ENCODE measurements at regions of chr15 and their contacts with region 1.

Region 1: GRCh38 chr15:55218056-55218455 is 21.3 kb upstream of the RSL24D1 start:
- DNase-seq: no peak
- H3K4me3 ChIP-seq: no peak overlapping the region
- H3K27ac ChIP-seq: no peak overlapping the region
- H3K4me1 ChIP-seq: no peaks in the 10 kb centered on the region
- H3K27me3 ChIP-seq: no peaks in the 10 kb centered on the region
- CTCF ChIP-seq: no peak
- EP300 ChIP-seq: no peak
- POLR2A ChIP-seq: no peak
- RAD21 ChIP-seq: no peak

Region 2: DNA sequence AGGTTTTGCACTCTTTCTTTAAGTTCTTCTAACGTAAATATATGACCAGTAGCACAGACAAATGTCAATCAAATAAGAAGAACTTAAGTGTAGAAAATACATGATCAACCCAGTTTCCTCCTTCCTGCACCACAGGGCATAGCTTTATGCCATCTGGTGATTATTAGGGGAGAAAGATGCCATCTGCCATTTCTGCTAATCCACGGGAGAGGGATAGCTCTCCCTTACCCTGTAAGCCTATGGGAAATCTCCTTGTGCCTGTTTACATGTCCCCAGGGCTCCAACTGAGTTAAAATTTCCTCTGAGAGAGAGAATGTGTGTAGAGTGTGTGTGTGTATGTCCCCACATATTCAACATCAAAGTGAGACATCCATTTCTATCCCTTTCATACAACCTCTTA is 157.2 kb before region 1 on chr15:
- CTCF ChIA-PET with region 1: no interaction called
- POLR2A ChIA-PET with region 1: no interaction called
- DNase-seq: no peak
- H3K4me3 ChIP-seq: no peak overlapping the region
- H3K27ac ChIP-seq: no peak overlapping the region
- H3K4me1 ChIP-seq: no peaks in the 10 kb centered on the region; a peak in 1 of 7 replicates
- H3K27me3 ChIP-seq: no peaks in the 10 kb centered on the region
- CTCF ChIP-seq: no peak
- EP300 ChIP-seq: no peak
- POLR2A ChIP-seq: no peak
- RAD21 ChIP-seq: no peak

Region 3: DNA sequence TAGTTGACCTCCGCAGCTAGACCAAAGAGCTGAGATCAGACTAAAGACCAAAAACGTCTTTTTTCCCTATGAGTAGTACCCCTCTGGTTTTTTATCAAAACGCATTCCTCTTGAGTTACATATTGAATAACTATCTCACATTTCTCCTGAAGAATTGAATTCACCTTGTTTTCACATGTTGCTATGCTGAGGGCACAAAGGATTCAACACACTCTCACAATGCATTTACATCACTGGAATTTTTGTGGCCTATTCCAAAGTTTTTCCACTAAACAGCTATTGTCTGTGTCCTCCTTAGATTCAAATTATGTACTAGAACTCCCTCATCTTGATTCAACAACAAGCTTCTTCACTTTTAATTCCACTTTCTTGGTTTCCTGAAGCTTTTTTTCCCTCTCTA is 133.8 kb before region 1 on chr15:
- CTCF ChIA-PET with region 1: no interaction called
- POLR2A ChIA-PET with region 1: no interaction called
- DNase-seq: no peak
- H3K4me3 ChIP-seq: no peak overlapping the region
- H3K27ac ChIP-seq: no peak overlapping the region
- H3K4me1 ChIP-seq: no peaks in the 10 kb centered on the region
- H3K27me3 ChIP-seq: no peaks in the 10 kb centered on the region
- CTCF ChIP-seq: no peak
- EP300 ChIP-seq: no peak
- POLR2A ChIP-seq: no peak
- RAD21 ChIP-seq: no peak

Region 4: GRCh38 chr15:55202206-55202605 is 15.8 kb before region 1 on chr15:
- CTCF ChIA-PET with region 1: interaction called, 14 read pairs
- POLR2A ChIA-PET with region 1: interaction called, 6 read pairs
- DNase-seq: no peak
- H3K4me3 ChIP-seq: no peak overlapping the region
- H3K27ac ChIP-seq: no peak overlapping the region
- H3K4me1 ChIP-seq: no peaks in the 10 kb centered on the region
- H3K27me3 ChIP-seq: no peaks in the 10 kb centered on the region; a peak in 1 of 7 replicates
- CTCF ChIP-seq: no peak
- EP300 ChIP-seq: no peak
- POLR2A ChIP-seq: no peak
- RAD21 ChIP-seq: no peak

Region 5: DNA sequence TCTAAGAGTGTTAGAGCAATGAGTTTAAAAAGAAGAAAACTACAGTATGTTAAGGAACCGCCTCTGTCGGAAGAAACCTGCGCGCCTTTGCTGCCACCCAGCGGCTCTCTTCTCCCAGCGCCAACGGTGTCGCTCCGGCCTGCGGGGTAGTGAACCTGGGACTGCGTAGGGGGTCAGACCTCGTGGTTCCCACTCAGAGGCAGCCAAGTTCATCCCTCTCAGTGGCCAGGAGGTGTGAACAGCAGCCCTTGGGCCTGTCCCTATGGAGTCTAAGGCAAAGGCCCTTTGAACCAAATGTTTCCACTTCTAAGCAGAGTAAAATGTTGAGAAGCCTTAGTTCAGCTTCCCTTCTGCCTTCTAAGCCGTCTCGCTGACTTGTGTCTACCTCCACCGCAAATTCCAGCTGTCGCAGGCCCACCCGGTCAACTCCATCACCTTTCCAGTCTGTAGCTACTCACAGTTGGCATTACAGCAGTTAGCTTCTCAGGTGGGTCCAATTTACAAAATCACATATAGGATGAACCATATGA is 72.5 kb after region 1 on chr15:
- CTCF ChIA-PET with region 1: interaction called, 30 read pairs
- POLR2A ChIA-PET with region 1: no interaction called
- DNase-seq: peak; percentile 43 to 83
- H3K4me3 ChIP-seq: peak overlapping the region in 3 of 4 experiments; percentile 39 to 87 (median 77); a peak in 5 of 8 replicates
- H3K27ac ChIP-seq: no peak overlapping the region
- H3K4me1 ChIP-seq: peaks cover 0 to 5% (median 2%) of the 10 kb centered on the region in 4 experiments; a peak in 1 of 7 replicates
- H3K27me3 ChIP-seq: peaks cover 0 to 4% (median 2%) of the 10 kb centered on the region in 4 experiments; a peak in 2 of 7 replicates
- CTCF ChIP-seq: peak; percentile 77 to 85 (median 85)
- EP300 ChIP-seq: no peak
- POLR2A ChIP-seq: no peak
- RAD21 ChIP-seq: peak; percentile 89 to 91

Region 6: GRCh38 chr15:55457401-55458022 is 239.5 kb after region 1 on chr15:
- CTCF ChIA-PET with region 1: no interaction called
- POLR2A ChIA-PET with region 1: no interaction called
- DNase-seq: no peak
- H3K4me3 ChIP-seq: no peak overlapping the region
- H3K27ac ChIP-seq: no peak overlapping the region; the same call in 1 of the 2 replicates
- H3K4me1 ChIP-seq: no peaks in the 10 kb centered on the region
- H3K27me3 ChIP-seq: no peaks in the 10 kb centered on the region
- CTCF ChIP-seq: no peak
- EP300 ChIP-seq: no peak
- POLR2A ChIP-seq: no peak
- RAD21 ChIP-seq: no peak